ENCODE measurements at regions of chr11 and their contacts with region 1.

Region 1: DNA sequence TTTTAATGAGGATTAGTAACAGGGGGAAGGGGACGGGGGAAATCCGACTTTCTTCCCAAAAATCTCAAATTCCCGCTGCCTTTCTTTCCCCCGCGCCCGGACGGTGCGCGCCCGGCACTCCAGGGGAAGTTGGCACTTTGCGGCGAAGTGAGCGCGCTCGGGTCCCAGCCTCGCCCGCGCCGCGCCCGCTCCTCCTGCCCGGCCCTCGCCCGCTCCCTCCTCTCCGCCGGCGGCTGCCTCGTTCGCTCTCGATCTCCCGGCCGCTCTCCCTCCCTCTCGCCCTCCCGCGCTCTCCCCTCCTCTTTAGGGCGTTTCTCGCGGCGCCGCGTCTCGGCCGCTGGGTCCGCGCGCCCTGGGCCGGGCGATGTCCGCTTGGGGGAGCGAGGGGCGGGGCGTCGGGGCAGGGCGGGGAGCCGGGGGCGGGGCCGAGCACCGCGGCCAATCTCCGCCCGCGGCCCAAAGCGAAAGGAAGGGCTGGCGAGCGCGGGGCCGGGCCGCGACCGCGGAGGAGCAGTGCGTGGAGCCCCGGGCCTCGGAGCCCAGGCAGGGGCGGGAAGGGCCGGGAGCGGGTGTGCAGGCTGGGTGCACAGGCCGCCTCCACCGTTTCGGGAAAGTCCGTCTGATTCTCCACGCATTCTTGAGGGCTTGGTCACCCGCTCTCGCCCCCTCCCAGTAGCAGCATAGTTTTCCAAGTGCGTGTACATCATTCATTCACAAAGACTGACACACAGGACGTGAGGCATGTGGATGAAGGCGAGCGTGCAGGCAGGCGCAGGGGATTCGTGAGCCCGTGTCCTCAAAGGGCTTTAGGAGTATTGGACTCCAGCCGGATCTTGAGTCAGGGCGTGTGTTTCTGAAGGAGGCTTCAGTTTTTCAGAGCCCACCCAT is 65.1 kb downstream of the ETS1 start:
- DNase-seq: peak; percentile 69 to 91 (median 85)
- ATAC-seq: peak; percentile 59 to 65
- H3K4me3 Mint-ChIP-seq: peak overlapping the region; percentile 89 to 99 (median 98)
- H3K27ac Mint-ChIP-seq: peak overlapping the region; percentile 93 to 100 (median 96)
- H3K4me1 Mint-ChIP-seq: peaks cover 30 to 65% (median 50%) of the 10 kb centered on the region in 4 donors
- H3K27me3 Mint-ChIP-seq: no peaks in the 10 kb centered on the region

Region 2: GRCh38 chr11:128302425-128303186 is 219.7 kb before region 1 on chr11:
- POLR2A ChIA-PET with region 1: interaction called, 38 read pairs
- DNase-seq: peak; percentile 24 to 94 (median 78)
- ATAC-seq: peak; percentile 78 to 88
- H3K4me3 Mint-ChIP-seq: peak overlapping the region; percentile 85 to 95 (median 91)
- H3K27ac Mint-ChIP-seq: peak overlapping the region; percentile 97 to 100 (median 99)
- H3K4me1 Mint-ChIP-seq: peaks cover 48 to 95% (median 84%) of the 10 kb centered on the region in 4 donors
- H3K27me3 Mint-ChIP-seq: no peaks in the 10 kb centered on the region

Region 3: GRCh38 chr11:128472128-128473089 is 49.9 kb before region 1 on chr11:
- POLR2A ChIA-PET with region 1: interaction called, 308 read pairs
- DNase-seq: peak in 6 of 10 donors; percentile 26 to 56 (median 50)
- ATAC-seq: peak; percentile 2 to 33
- H3K4me3 Mint-ChIP-seq: peak overlapping the region; percentile 75 to 93 (median 88)
- H3K27ac Mint-ChIP-seq: peak overlapping the region; percentile 93 to 99 (median 98)
- H3K4me1 Mint-ChIP-seq: peaks cover 67 to 100% (median 96%) of the 10 kb centered on the region in 4 donors
- H3K27me3 Mint-ChIP-seq: no peaks in the 10 kb centered on the region

Region 4: GRCh38 chr11:128497061-128497775 is 25.1 kb before region 1 on chr11:
- POLR2A ChIA-PET with region 1: interaction called, 603 read pairs
- DNase-seq: no peak
- ATAC-seq: no peak
- H3K4me3 Mint-ChIP-seq: peak overlapping the region; percentile 82 to 95 (median 89)
- H3K27ac Mint-ChIP-seq: peak overlapping the region; percentile 91 to 98 (median 96)
- H3K4me1 Mint-ChIP-seq: peaks cover 62 to 100% (median 97%) of the 10 kb centered on the region in 4 donors
- H3K27me3 Mint-ChIP-seq: no peaks in the 10 kb centered on the region

Region 5: DNA sequence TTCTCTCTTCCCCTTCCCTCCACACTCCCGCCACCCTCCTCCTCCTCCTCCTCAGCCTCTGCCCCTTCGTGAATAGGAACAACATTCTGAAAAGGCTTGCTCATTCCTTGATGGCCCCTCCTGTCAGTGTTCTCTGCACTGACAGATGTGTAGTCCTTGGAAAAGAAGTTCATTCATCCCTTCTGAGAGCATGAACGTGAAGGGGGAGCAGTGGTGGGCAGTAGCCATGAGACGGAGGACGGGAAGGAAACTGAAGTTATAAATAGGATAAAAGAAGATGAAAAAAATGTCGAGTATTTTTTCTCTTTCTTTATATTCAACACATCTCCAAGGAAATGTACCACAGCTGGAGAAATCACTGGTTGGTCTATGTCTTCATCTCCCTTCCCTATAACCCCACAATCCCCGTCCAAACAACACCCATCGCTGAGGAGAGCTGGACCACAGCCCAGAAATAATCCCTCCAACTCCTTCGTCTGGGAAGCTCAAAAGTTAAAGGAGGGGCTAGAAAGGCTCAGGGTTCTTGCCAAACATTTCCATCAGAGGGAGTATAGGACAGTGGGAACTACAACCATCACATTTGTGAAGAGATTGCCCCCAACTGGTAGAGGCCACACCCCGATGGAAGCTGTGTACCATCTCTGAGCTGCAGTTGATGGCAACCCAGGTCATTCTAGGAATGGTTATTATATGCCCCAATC is 31.5 kb after region 1 on chr11:
- POLR2A ChIA-PET with region 1: interaction called, 161 read pairs
- DNase-seq: no peak
- ATAC-seq: no peak
- H3K4me3 Mint-ChIP-seq: peak overlapping the region in 4 of 10 donors; percentile 9 to 36 (median 27)
- H3K27ac Mint-ChIP-seq: peak overlapping the region in 9 of 10 donors; percentile 64 to 100 (median 92)
- H3K4me1 Mint-ChIP-seq: peaks cover 31 to 64% (median 56%) of the 10 kb centered on the region in 4 donors
- H3K27me3 Mint-ChIP-seq: no peaks in the 10 kb centered on the region

Region 6: DNA sequence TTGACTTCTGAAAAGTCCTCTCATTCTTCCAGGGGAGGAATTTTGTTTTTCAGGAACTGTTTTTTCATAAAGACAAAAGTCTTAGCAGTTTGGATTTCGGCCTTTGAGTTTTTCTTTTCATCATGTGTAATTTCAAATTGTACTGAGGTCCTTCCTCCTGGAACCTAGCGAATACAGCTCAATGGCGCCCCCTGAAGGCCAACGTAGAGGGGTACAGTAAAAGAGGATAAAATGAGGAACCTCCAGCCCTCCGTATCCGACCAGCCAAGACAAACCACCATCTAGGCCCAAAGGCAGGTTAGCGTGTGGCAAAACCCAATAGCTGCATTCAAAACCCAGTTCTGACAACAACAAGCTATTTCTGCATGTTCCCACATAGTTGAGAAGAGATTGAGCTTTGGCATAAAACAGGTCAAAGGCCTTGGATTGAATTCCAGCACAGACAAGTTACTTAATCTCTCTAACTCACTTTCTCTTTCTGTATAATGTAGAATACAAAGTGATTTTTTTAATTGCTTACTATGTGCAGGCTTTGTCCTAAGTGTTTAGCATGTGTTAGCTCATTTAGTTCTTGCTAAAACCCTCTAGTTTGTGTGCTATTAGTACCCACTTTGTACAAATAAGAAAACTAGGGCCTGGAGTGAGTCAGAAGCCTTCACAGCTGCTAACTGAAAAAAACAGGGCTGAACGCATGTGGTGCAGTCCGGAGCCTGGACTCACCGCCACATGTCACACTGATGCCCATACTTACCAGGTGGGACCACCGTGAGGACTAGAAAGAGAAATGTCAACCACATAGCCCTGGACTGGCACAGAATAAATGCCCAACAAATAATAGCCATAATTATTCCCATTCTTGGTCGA is 108.3 kb after region 1 on chr11:
- POLR2A ChIA-PET with region 1: interaction called, 476 read pairs
- DNase-seq: peak; percentile 76 to 95 (median 90)
- ATAC-seq: peak; percentile 70 to 81
- H3K4me3 Mint-ChIP-seq: peak overlapping the region; percentile 51 to 83 (median 76)
- H3K27ac Mint-ChIP-seq: peak overlapping the region; percentile 93 to 99 (median 95)
- H3K4me1 Mint-ChIP-seq: peaks cover 44 to 82% (median 68%) of the 10 kb centered on the region in 4 donors
- H3K27me3 Mint-ChIP-seq: peaks cover 0 to under 1% (median 0%) of the 10 kb centered on the region in 5 donors

Measured in naive thymus-derived CD8-positive, alpha-beta T cell (primary cell).